ENCODE measurements at regions of chr1 and their contacts with region 1.

Region 1: DNA sequence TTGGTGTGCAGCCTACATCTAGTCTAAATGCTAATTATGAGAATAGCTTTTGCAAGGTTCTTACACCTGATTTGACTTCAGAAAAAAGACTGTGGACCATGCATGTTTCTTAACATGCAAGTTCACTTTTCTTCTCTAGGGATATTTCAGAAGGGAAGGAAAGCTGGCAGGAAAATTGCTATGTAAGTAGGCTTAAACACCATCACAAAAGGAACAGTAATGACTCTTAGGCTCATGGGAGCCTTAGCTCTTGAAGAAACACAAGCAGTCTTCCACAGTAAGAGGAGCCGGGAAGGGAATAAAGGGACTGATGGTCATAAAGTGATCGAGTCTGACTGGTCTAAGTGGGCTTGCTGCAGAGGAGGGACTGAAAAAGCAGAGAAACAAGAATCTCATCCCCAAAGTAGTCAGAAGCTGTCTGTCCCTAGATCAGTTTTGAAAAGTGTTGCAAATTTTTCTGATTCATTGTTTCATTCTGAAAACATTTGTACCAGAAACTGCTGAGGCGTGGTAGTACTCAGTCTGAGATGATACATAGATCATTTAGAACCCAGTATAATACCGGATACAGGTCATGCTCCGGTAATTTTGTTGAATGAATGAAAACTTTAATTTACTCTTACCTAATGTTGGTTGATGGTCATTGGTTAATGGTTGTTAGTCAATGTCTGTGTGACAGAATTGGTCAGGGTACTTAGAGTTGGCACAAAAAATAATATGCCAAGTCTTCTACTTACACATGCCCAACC is 40.9 kb downstream of the SMYD2 start:
- DNase-seq: no peak
- H3K4me3 ChIP-seq: no peak overlapping the region
- H3K27ac ChIP-seq: no peak overlapping the region
- H3K4me1 ChIP-seq: no peaks in the 10 kb centered on the region
- H3K27me3 ChIP-seq: no peaks in the 10 kb centered on the region
- CTCF ChIP-seq: no peak
- EP300 ChIP-seq: no peak
- POLR2A ChIP-seq: no peak

Region 2: DNA sequence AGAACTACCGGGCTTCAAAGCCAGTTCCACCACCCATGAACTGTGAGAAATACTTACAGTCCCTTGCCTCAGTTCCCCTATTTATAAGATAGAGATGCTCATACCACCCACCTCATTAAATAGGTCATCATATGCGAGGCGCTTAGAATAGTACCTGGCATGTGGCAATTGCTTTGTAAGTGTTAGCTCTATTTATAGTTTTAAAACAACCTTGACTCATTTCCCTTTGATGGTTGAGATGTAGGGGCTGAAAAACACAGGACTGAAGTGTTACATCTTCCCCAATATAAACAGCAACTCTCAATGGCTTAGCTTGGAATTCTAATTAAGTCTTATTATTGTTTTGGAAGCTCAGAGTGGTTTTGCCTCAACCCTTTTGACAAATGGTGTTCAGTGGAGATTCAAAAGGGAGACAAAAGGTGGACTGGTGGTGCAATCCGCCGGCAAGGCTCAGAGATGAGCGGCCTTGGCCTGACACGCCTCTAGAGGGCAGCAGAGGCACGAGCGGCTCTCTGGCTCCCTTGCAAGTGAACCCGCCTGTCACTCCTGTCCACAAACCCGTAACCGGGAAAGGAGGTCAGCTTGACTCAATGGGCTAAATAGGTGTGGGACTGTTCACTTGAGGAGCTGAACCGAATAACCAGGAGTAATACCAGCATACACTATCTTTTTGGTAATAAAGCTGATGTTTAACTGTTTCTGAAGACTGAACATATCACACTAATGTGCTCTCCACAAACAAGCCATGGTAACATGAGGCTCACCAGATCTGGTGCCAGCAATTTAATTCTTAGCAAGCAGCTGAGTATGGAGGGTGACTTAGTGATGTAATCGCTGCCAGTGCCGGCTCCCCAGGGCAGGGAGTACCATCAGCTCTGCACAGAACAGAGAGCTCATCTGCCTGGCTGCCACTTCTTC is 60.4 kb before region 1 on chr1:
- in situ Hi-C with region 1: loop called (anchors 5 to 10 kb)
- intact Hi-C with region 1: no loop called
- DNase-seq: peak; percentile 83
- H3K4me3 ChIP-seq: no peak overlapping the region
- H3K27ac ChIP-seq: no peak overlapping the region
- H3K4me1 ChIP-seq: no peaks in the 10 kb centered on the region
- H3K27me3 ChIP-seq: peaks cover 60% of the 10 kb centered on the region
- CTCF ChIP-seq: peak; percentile 67 to 95 (median 89)
- EP300 ChIP-seq: no peak
- POLR2A ChIP-seq: no peak

Region 3: DNA sequence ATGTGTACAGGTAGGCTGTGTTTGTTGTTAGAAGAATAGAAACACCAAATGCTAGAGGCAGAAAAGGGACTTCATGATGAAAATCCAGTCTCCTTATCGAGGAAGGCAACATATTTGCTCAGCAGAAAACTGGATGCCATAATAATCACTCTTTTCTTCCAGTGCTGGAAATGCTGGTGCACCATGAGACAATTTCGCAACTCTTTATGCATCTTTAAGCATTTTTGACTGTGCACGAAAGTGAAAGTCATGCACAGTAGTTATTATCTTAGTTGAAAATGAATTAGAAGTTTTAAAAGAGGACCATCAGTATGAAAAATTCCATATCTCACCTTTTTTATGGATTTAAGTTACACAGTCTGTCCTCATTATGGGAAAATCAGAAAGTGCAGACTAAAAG is 11.9 kb before region 1 on chr1:
- in situ Hi-C with region 1: no loop called
- intact Hi-C with region 1: no loop called
- DNase-seq: no peak
- H3K4me3 ChIP-seq: no peak overlapping the region
- H3K27ac ChIP-seq: no peak overlapping the region
- H3K4me1 ChIP-seq: no peaks in the 10 kb centered on the region
- H3K27me3 ChIP-seq: no peaks in the 10 kb centered on the region
- CTCF ChIP-seq: no peak
- EP300 ChIP-seq: no peak
- POLR2A ChIP-seq: no peak

Measured in transverse colon (tissue), 4 donors.